ENCODE measurements at regions of chr16 and their contacts with region 1.

Region 1: GRCh38 chr16:62224646-62225209 is 188.5 kb upstream of the CDH8 start:
- DNase-seq: no peak
- H3K27ac ChIP-seq: no peak overlapping the region
- CTCF ChIP-seq: no peak

Region 2: DNA sequence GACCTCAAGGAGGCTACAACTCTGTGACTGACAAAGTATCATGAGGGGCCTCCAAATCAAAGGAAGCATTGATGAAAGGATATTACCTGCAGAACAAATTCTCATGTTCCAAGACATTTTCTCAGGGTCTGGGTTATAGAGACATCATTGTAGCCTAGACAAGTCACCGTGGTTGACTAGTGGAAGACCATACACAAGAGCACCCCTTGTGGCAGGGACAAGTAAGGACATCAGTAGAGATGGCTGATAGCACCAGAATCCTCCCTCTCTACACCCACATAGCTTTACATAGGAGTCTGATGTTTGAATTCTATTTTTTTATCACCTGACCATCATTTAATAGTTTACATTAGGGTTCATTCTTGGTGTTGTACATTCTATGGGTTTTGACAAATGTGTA is 156.0 kb before region 1 on chr16:
- CTCF ChIA-PET with region 1: no interaction called
- POLR2A ChIA-PET with region 1: no interaction called
- DNase-seq: peak; percentile 5
- H3K27ac ChIP-seq: no peak overlapping the region
- CTCF ChIP-seq: no peak

Region 3: DNA sequence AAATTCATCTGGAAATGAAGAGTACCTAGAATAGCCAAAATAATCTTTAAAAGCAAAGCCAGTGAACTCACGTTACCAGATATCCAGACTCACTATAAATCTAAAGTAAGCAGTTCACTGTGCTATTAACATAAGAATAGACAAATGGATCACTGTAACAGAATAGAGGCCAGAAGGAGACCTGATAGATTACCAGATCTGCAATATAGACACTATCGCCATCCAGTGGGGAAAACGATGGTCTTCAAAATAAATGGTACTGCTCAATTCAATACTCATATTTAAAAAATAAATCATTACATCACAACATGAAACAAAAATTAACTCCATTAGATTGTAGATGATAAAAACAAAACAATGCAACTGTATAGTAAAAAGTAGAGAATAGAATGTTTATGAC is 29.9 kb before region 1 on chr16:
- CTCF ChIA-PET with region 1: no interaction called
- POLR2A ChIA-PET with region 1: no interaction called
- DNase-seq: peak; percentile 11
- H3K27ac ChIP-seq: no peak overlapping the region
- CTCF ChIP-seq: no peak

Region 4: DNA sequence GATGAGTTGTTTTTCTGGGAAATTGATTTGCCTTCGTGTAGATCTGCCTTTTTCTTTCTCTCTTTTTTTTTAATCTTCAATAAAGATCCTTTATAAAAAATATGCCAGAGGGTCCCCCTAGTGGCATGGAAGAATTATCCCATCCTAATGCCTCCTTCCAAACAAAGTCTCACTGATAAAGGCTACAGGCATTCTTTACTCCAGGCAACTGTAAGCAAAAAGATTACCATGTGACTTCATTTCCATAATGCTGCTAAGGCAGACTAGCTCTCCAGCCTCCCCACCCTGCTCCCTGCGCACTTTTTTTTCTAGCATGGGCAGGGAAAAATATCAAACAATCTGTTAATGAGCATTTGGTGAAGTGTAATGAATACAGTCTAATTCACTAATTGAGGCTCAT is 31.7 kb after region 1 on chr16:
- CTCF ChIA-PET with region 1: interaction called, 10 read pairs
- POLR2A ChIA-PET with region 1: no interaction called
- DNase-seq: peak; percentile 45
- H3K27ac ChIP-seq: no peak overlapping the region
- CTCF ChIP-seq: peak; percentile 30

Measured in RWPE1 (cell line).